OCI-LY7 (cell line): ENCODE measurements at regions of chr17 and their contacts with region 1.

Region 1: DNA sequence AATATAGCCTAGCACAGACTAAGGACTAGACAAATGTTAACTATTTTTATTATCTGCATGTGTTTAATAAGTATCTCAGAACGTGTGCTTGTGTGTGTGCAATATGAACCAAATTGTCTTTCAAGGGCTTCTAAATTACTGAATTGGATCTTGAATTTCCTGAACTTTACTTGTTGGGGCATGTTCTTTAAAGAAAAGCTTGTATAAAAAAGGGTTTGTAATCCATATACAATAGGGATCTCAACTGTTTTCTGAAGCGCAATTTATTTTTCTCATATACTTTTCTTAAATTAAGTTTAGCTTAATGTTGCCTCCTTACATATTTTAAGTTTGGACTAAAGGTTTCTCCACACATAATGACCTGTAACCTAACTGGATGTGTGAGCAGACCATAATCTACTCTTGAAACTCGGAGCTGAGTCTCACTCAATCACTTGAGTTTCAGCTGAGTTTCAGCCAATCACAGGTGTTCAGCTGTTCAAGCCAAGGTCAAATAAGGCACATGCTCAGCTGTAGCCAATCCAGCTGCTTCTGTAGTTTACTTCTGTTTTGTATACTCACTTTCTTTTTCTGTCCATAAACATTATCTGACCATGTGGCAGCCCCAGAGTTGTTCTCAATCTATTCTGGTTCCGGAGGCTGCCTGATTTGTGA is 72.3 kb downstream of the CDK5R1 start:
- DNase-seq: peak; percentile 63
- H3K4me3 ChIP-seq: peak overlapping the region; percentile 30
- H3K27ac ChIP-seq: peak overlapping the region; percentile 49
- H3K4me1 ChIP-seq: peaks cover 42% of the 10 kb centered on the region
- CTCF ChIP-seq: no peak

Region 2: GRCh38 chr17:32519228-32520103 is 39.7 kb before region 1 on chr17:
- CTCF ChIA-PET with region 1: no interaction called
- POLR2A ChIA-PET with region 1: interaction called, 14 read pairs
- intact Hi-C with region 1: loop called (anchors 1 kb)
- DNase-seq: no peak
- H3K4me3 ChIP-seq: peak overlapping the region; percentile 29
- H3K27ac ChIP-seq: no peak overlapping the region
- H3K4me1 ChIP-seq: peaks cover 46% of the 10 kb centered on the region
- CTCF ChIP-seq: no peak

Region 3: DNA sequence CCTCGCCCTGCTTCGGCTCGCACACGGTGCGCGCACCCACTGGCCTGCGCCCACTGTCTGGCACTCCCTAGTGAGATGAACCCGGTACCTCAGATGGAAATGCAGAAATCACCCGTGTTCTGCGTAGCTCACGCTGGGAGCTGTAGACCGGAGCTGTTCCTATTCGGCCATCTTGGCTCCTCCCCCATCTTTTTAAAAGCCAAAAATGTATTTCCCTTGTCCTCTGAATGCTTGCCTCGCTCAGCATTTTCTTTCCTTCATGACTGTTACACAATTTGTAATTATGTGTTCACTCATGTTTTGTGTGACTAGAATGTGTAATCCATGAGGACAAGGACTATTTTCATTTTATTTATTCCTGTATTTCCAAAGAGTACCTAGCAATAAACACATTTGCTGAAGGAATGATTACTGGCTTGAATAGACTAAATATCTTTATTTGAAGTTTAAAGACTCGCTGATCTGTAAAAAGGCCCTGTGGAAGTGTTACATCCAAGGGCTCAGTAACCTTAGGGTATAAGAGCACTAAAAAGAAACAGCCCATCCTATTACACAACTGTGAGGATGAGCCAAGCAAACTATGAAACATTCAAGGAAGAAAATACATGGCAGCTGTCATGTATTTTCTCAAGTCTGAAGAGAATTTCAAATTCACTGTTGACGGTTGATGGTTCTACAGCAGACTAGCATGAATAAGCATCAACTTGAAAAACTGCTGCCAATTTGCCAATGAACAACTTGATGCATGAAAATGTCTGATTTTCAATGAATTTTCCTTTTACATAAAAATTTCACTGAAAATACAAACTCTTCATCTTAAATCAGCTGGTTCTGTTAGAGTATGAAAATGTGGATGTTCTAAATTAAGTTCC is 125.2 kb after region 1 on chr17:
- CTCF ChIA-PET with region 1: no interaction called
- POLR2A ChIA-PET with region 1: no interaction called
- intact Hi-C with region 1: no loop called
- DNase-seq: no peak
- H3K4me3 ChIP-seq: no peak overlapping the region
- H3K27ac ChIP-seq: no peak overlapping the region
- H3K4me1 ChIP-seq: no peaks in the 10 kb centered on the region
- CTCF ChIP-seq: no peak